ENCODE measurements at regions of chr18 and their contacts with region 1.

Region 1: GRCh38 chr18:77067291-77068061 is 65.1 kb downstream of the MBP start:
- DNase-seq: peak in 30 of 35 experiments; percentile 31 to 80 (median 51)
- ATAC-seq: peak; percentile 9 to 56 (median 44)
- H3K4me3 ChIP-seq: no peak overlapping the region
- H3K4me3 Mint-ChIP-seq: peak overlapping the region; percentile 38 to 72 (median 71)
- H3K27ac ChIP-seq: peak overlapping the region; percentile 82
- H3K27ac Mint-ChIP-seq: peak overlapping the region; percentile 87 to 100
- H3K4me1 ChIP-seq: peaks cover 47 to 97% of the 10 kb centered on the region in 2 experiments
- H3K4me1 Mint-ChIP-seq: peaks cover 97 to 100% (median 100%) of the 10 kb centered on the region in 3 donors
- H3K27me3 ChIP-seq: no peaks in the 10 kb centered on the region
- H3K27me3 Mint-ChIP-seq: no peaks in the 10 kb centered on the region

Region 2: GRCh38 chr18:77054606-77055428 is 12.7 kb before region 1 on chr18:
- CTCF ChIA-PET with region 1: interaction called, 3 to 10 read pairs
- POLR2A ChIA-PET with region 1: interaction called, 3 to 6 read pairs
- DNase-seq: peak; percentile 62 to 91 (median 81)
- ATAC-seq: peak; percentile 87 to 90 (median 88)
- H3K4me3 ChIP-seq: peak overlapping the region; percentile 8 to 56
- H3K4me3 Mint-ChIP-seq: peak overlapping the region; percentile 61 to 64 (median 62)
- H3K27ac ChIP-seq: peak overlapping the region; percentile 83
- H3K27ac Mint-ChIP-seq: peak overlapping the region; percentile 91 to 95
- H3K4me1 ChIP-seq: peaks cover 36 to 80% of the 10 kb centered on the region in 2 experiments
- H3K4me1 Mint-ChIP-seq: peaks cover 66 to 80% (median 73%) of the 10 kb centered on the region in 3 donors
- H3K27me3 ChIP-seq: no peaks in the 10 kb centered on the region
- H3K27me3 Mint-ChIP-seq: no peaks in the 10 kb centered on the region

Region 3: DNA sequence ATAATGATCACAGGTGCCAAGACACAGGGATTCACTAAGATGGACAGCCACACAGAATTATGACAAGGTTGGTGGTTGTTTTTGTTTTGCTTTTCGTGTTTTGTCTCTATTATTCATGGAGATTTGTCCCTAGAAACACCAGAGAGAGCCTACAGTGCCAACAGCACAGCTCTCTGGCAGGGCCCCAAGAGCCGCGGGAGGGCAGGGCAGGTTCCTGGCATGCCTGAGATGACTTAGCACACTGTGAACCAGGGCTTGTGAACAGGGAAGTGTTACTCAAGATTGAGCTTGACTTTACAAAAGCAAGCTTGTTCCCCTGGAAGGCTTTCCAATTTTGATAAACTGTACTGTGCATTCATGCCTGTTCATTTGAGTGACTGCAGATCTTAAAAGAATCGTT is 1474.7 kb after region 1 on chr18:
- CTCF ChIA-PET with region 1: no interaction called
- POLR2A ChIA-PET with region 1: no interaction called
- DNase-seq: no peak
- ATAC-seq: no peak
- H3K4me3 ChIP-seq: no peak overlapping the region
- H3K4me3 Mint-ChIP-seq: no peak overlapping the region
- H3K27ac ChIP-seq: no peak overlapping the region
- H3K27ac Mint-ChIP-seq: no peak overlapping the region
- H3K4me1 ChIP-seq: no peaks in the 10 kb centered on the region
- H3K4me1 Mint-ChIP-seq: peaks cover 0 to 7% (median 0%) of the 10 kb centered on the region in 3 donors
- H3K27me3 ChIP-seq: peaks cover 0 to 3% of the 10 kb centered on the region in 2 experiments
- H3K27me3 Mint-ChIP-seq: no peaks in the 10 kb centered on the region

Measured in T-cell (primary cell).